ENCODE measurements at regions of chr16 and their contacts with region 1.

Region 1: DNA sequence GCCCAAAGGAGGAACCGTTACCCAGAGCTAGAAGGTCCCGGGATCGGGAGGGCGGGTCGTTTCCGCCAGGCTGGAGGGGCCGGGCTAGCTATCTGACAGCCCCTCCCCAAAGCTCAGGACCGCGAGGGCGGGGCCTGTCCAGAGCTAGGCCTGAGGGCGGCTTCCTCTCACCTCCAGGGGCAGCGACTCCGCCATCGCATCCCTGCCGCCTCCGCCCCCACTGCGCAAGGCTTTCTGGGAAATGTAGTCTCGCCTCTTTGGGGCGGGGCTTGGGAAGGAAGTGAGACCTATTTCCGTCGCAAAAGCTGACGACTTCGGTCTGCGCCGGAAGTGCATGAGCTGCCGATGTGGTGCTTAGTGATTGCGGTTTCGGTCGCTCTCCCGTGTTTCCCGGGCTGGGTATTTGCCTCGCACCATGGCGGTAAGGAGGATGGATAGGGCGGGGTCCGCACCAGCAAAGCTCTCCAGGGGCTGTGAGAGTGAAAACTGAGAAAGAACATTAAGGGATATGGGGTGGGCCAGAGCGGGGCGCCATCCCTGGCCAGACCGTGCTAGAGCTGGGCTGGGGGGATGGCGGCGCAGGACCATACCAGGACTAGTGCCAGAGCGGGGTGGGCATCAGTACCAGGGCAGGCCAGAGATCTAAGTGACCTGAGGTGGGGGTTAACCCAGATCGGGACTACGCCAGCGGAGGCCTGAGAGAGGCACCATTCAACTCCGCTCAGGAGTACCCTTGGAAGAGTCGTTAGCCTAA is at the start of gene TMEM208:
- DNase-seq: peak; percentile 99
- ATAC-seq: peak; percentile 97 to 99 (median 97)
- H3K4me3 ChIP-seq: peak within 1 kb of the TSS; percentile 100
- H3K4me3 Mint-ChIP-seq: peak within 1 kb of the TSS; percentile 100
- H3K27ac ChIP-seq: peak within 1 kb of the TSS; percentile 80
- H3K27ac Mint-ChIP-seq: peak within 1 kb of the TSS; percentile 96 to 99
- H3K4me1 ChIP-seq: peaks cover 26% of the 10 kb centered on the region
- H3K4me1 Mint-ChIP-seq: peaks cover 28 to 29% of the 10 kb centered on the region in 2 donors
- H3K27me3 ChIP-seq: no peaks in the 10 kb centered on the region
- H3K27me3 Mint-ChIP-seq: no peaks in the 10 kb centered on the region
- CTCF ChIP-seq: peak; percentile 17
- total RNA-seq, gene TMEM208: 34.5 to 39.2 (median 36.7) TPM

Region 2: GRCh38 chr16:65909310-65910050 is 1317.5 kb before region 1 on chr16:
- intact Hi-C with region 1: no loop called
- DNase-seq: no peak
- ATAC-seq: no peak
- H3K4me3 ChIP-seq: no peak overlapping the region
- H3K4me3 Mint-ChIP-seq: no peak overlapping the region
- H3K27ac ChIP-seq: no peak overlapping the region
- H3K27ac Mint-ChIP-seq: no peak overlapping the region
- H3K4me1 ChIP-seq: no peaks in the 10 kb centered on the region
- H3K4me1 Mint-ChIP-seq: no peaks in the 10 kb centered on the region
- H3K27me3 ChIP-seq: no peaks in the 10 kb centered on the region
- H3K27me3 Mint-ChIP-seq: peaks cover 11 to 14% of the 10 kb centered on the region in 2 donors
- CTCF ChIP-seq: no peak

Region 3: GRCh38 chr16:67137605-67138004 is 89.4 kb before region 1 on chr16:
- intact Hi-C with region 1: no loop called
- DNase-seq: no peak
- ATAC-seq: no peak
- H3K4me3 ChIP-seq: no peak overlapping the region
- H3K4me3 Mint-ChIP-seq: no peak overlapping the region
- H3K27ac ChIP-seq: no peak overlapping the region
- H3K27ac Mint-ChIP-seq: no peak overlapping the region
- H3K4me1 ChIP-seq: no peaks in the 10 kb centered on the region
- H3K4me1 Mint-ChIP-seq: no peaks in the 10 kb centered on the region
- H3K27me3 ChIP-seq: no peaks in the 10 kb centered on the region
- H3K27me3 Mint-ChIP-seq: no peaks in the 10 kb centered on the region
- CTCF ChIP-seq: no peak

Region 4: GRCh38 chr16:67159593-67160406 is 67.2 kb before region 1 on chr16 and contains the starts of genes FBXL8 and TRADD:
- intact Hi-C with region 1: no loop called
- DNase-seq: peak; percentile 82 to 90
- ATAC-seq: peak; percentile 69 to 85 (median 76)
- H3K4me3 ChIP-seq: peak within 1 kb of the TSS; percentile 93
- H3K4me3 Mint-ChIP-seq: peak within 1 kb of the TSS; percentile 88
- H3K27ac ChIP-seq: peak within 1 kb of the TSS; percentile 88
- H3K27ac Mint-ChIP-seq: peak within 1 kb of the TSS; percentile 80 to 85
- H3K4me1 ChIP-seq: peaks cover 82% of the 10 kb centered on the region
- H3K4me1 Mint-ChIP-seq: peaks cover 25 to 46% of the 10 kb centered on the region in 2 donors
- H3K27me3 ChIP-seq: peaks cover 27% of the 10 kb centered on the region
- H3K27me3 Mint-ChIP-seq: peaks cover 0 to 16% of the 10 kb centered on the region in 2 donors
- CTCF ChIP-seq: peak; percentile 61
- total RNA-seq, gene FBXL8: 5.2 to 8.3 (median 6.3) TPM
- total RNA-seq, gene TRADD: 15.2 to 27.5 (median 26.8) TPM

Region 5: DNA sequence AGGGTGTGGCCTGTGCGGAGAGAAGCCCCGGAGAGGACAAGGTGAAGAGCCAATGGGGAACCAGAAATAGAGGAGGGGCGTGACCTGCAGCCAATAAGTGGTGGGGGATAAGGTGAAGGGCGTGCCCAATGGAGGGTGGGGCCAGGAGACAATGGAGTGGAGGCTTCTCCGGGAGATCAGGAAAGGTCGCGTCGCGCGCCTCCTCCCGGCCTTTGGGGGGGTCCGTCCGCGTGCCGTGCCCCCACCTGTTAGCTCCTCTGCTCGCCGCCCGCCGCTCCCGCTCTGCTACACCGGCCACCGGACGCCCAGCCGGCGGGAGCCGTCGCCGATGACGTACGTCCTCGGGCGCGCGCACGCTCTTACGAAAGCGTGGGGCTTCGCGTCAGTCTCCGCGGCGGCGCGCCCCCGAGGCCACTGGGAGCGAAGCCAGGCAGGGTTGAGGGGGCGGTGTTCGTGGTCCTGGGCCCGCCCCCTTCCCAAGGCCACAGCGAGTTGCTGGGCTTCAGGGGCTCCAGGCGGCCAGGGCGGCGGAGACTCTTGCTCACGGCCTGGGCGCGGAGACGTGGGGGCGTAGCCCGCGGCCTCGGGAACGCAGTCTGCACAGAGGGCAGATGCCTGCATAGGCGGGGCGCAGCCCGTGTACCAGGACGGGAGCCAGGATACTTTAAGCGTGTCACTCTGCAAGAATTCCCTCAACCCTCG is 43.2 kb before region 1 on chr16 and contains the start of gene MATCAP1:
- intact Hi-C with region 1: loop called (anchors 2 kb)
- DNase-seq: peak; percentile 90 to 97
- ATAC-seq: peak; percentile 93 to 97 (median 94)
- H3K4me3 ChIP-seq: peak within 1 kb of the TSS; percentile 63
- H3K4me3 Mint-ChIP-seq: peak within 1 kb of the TSS; percentile 95
- H3K27ac ChIP-seq: peak within 1 kb of the TSS; percentile 79
- H3K27ac Mint-ChIP-seq: peak within 1 kb of the TSS in 1 of 2 donors; percentile 83
- H3K4me1 ChIP-seq: peaks cover 24% of the 10 kb centered on the region
- H3K4me1 Mint-ChIP-seq: peaks cover 8 to 14% of the 10 kb centered on the region in 2 donors
- H3K27me3 ChIP-seq: peaks cover 2% of the 10 kb centered on the region
- H3K27me3 Mint-ChIP-seq: peaks cover 0 to 7% of the 10 kb centered on the region in 2 donors
- CTCF ChIP-seq: no peak
- total RNA-seq, gene MATCAP1: 7.2 to 12.6 (median 10.9) TPM

Region 6: DNA sequence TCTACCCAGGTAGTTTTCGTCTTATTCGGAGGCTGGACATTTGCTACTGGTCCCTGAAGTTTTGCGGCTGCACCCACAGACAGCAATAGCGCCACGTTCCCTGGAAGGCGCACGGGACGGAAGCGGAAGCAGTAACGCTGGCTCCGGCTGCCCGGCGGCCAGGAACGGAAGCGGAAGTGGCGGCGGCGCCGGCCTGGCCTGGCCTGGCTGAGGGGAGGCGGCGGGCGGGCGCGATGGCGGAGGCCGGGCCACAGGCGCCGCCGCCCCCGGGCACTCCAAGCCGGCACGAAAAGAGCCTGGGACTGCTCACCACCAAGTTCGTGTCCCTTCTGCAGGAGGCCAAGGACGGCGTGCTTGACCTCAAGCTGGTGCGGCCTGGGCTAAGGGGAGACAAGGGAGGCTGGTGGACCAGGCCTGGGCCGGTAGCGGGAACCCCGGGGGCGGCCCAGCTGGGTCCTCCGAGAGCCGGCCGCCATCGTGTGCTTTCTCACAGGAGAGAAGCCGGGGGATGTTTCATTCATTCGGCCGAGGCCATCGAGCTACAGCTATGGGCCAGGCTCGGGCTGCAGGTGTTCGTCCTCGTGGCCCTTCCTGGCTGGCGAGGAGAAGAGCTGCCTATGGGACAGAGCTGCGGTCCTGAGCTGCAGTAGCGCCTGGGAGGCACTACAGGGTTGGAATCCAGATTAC is 34.8 kb before region 1 on chr16 and contains the start of gene E2F4:
- intact Hi-C with region 1: loop called (anchors 2 kb)
- DNase-seq: peak; percentile 84 to 93
- ATAC-seq: peak; percentile 97 to 99 (median 98)
- H3K4me3 ChIP-seq: peak within 1 kb of the TSS; percentile 82
- H3K4me3 Mint-ChIP-seq: peak within 1 kb of the TSS; percentile 92
- H3K27ac ChIP-seq: peak within 1 kb of the TSS; percentile 45
- H3K27ac Mint-ChIP-seq: peak within 1 kb of the TSS; percentile 75 to 86
- H3K4me1 ChIP-seq: peaks cover 25% of the 10 kb centered on the region
- H3K4me1 Mint-ChIP-seq: peaks cover 34 to 52% of the 10 kb centered on the region in 2 donors
- H3K27me3 ChIP-seq: no peaks in the 10 kb centered on the region
- H3K27me3 Mint-ChIP-seq: no peaks in the 10 kb centered on the region
- CTCF ChIP-seq: no peak
- total RNA-seq, gene E2F4: 57.6 to 91.7 (median 74.5) TPM

Region 7: DNA sequence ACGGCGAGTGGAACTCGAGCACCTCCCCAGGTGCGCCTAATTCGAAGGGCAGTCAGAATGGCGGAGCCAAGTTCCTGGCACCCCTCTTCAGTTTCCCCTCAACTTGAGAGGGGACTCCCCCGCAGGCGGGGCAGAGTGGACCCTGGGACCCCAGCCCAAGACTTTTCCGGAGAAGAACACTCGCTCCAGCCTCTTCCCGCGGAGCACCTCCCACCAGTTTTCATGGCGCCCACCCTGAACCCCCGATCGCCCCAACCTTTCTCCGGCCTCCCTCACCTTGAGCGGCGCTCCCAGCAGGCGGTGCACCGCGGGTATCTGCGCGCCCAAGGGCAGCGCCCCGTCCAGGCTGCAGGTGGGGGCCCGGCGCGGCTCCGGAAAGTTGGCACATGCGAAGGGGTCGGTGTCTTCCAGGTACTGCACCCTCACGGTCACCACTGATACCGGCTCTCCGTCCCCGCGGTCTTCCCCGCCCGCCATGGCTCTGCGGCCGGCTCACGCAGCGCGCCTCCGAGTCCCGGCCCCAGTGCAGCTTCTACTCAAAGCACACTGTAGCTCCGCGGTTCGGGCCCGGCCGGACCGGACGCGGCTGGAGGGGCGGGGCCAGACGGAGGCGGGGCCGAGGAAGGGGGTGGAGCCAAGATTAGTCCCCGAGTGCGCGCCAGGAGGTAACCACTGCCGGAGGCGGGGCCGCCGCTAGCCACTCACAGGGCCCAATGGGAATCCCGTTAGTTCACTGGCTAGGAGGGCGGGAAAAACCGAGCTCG is 20.1 kb after region 1 on chr16 and contains the start of gene FHOD1:
- intact Hi-C with region 1: loop called (anchors 1 kb)
- DNase-seq: peak; percentile 95 to 99
- ATAC-seq: peak; percentile 73 to 91 (median 82)
- H3K4me3 ChIP-seq: peak within 1 kb of the TSS; percentile 65
- H3K4me3 Mint-ChIP-seq: peak within 1 kb of the TSS; percentile 96
- H3K27ac ChIP-seq: peak within 1 kb of the TSS; percentile 60
- H3K27ac Mint-ChIP-seq: peak within 1 kb of the TSS; percentile 92 to 98
- H3K4me1 ChIP-seq: peaks cover 57% of the 10 kb centered on the region
- H3K4me1 Mint-ChIP-seq: peaks cover 33 to 58% of the 10 kb centered on the region in 2 donors
- H3K27me3 ChIP-seq: peaks cover 17% of the 10 kb centered on the region
- H3K27me3 Mint-ChIP-seq: peaks cover 18 to 31% of the 10 kb centered on the region in 2 donors
- CTCF ChIP-seq: no peak
- total RNA-seq, gene FHOD1: 79.3 to 96.8 (median 89.2) TPM

Region 8: DNA sequence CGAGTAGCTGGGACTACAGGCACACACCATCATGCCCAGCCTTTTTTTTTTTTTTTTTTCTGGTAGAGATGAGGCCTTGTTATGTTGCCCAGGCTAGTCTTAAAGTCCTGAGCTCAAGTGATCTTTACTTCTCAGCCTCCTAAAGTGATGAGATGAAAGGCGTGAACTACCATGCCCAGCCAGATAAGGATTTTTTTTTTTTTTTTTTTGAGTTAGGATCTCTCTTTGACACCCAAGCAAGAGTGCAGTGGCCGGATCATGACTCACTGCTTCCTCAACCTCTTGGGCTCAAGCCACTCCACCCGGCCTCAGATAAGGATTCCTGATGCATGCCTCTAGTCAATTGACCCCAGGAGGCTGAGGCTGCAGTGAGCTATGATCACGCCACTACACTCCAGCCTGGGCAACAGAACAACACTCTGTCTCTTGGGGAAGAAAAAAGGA is 41.2 kb after region 1 on chr16:
- intact Hi-C with region 1: no loop called
- DNase-seq: no peak
- ATAC-seq: no peak
- H3K4me3 ChIP-seq: no peak overlapping the region
- H3K4me3 Mint-ChIP-seq: no peak overlapping the region
- H3K27ac ChIP-seq: no peak overlapping the region
- H3K27ac Mint-ChIP-seq: no peak overlapping the region
- H3K4me1 ChIP-seq: no peaks in the 10 kb centered on the region
- H3K4me1 Mint-ChIP-seq: no peaks in the 10 kb centered on the region
- H3K27me3 ChIP-seq: no peaks in the 10 kb centered on the region
- H3K27me3 Mint-ChIP-seq: peaks cover 1 to 10% of the 10 kb centered on the region in 2 donors
- CTCF ChIP-seq: no peak

Measured in natural killer cell (primary cell).